ENCODE measurements at regions of chr19 and their contacts with region 1.

Region 1: DNA sequence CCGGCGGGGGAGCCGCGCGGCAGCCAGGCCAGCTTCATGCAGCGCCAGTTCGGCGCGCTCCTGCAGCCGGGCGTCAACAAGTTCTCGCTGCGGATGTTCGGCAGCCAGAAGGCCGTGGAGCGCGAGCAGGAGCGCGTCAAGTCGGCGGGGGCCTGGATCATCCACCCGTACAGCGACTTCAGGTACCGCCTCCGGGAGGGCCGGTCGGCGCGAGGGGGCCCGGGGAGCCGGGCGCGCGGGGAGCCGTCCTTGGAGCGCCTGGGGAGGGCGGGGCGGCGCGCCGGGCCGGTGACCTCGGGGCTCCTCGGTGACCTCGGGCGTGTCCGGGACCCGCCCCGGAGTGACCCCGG is 690 bp downstream of the HCN2 start:
- DNase-seq: no peak
- H3K4me3 ChIP-seq: peak overlapping the region in 1 of 4 donors; percentile 34
- H3K27ac ChIP-seq: no peak overlapping the region
- H3K4me1 ChIP-seq: peaks cover 0 to 28% of the 10 kb centered on the region in 2 donors
- H3K27me3 ChIP-seq: peaks cover 21% of the 10 kb centered on the region
- CTCF ChIP-seq: no peak
- POLR2A ChIP-seq: no peak

Region 2: DNA sequence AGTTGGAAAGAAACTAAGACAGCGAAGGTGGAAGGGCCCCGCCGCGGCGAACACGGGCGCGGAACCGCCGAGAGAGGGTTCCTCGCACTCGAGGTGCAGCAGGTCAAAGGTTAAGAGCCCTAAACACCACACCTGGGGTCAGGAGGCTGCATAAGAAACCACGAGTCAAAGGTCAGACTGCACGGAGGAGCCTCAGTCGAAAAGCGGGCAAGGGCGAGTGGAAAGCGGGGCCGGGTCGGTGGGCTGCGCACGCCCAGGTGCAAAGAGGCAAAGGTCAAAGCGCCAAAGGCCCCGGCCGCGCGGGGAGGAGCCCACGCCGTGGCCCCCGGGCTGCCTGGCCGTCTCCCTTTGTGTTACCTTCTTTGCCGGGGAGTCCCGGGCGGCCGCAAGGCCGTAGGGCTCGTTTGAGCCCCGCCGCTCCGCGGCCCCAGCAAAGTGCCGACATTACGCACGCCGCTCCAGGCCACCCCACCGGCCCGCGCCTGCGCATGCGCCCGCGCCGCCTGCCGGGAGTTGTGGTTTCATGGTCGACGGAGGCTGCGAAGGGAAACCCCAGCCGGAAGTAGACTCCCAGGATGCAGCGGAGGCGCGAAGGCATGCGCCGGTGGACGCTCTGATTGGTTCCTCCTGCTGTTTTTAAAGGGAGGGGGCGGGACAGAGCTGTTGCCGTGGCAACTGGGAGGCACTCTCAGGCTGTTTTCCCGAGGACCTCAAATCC is 42.9 kb after region 1 on chr19 and contains the start of gene POLRMT:
- intact Hi-C with region 1: no loop called
- DNase-seq: peak; percentile 98 to 100 (median 99)
- H3K4me3 ChIP-seq: peak within 1 kb of the TSS; percentile 54 to 90 (median 62)
- H3K27ac ChIP-seq: peak within 1 kb of the TSS; percentile 55 to 87 (median 79)
- H3K4me1 ChIP-seq: peaks cover 9 to 22% of the 10 kb centered on the region in 2 donors
- H3K27me3 ChIP-seq: no peaks in the 10 kb centered on the region
- CTCF ChIP-seq: peak in 3 of 6 experiments; percentile 10 to 27 (median 19)
- POLR2A ChIP-seq: peak; percentile 17 to 31
- total RNA-seq, gene POLRMT: 26.3 to 61.4 (median 41.4) TPM

Region 3: DNA sequence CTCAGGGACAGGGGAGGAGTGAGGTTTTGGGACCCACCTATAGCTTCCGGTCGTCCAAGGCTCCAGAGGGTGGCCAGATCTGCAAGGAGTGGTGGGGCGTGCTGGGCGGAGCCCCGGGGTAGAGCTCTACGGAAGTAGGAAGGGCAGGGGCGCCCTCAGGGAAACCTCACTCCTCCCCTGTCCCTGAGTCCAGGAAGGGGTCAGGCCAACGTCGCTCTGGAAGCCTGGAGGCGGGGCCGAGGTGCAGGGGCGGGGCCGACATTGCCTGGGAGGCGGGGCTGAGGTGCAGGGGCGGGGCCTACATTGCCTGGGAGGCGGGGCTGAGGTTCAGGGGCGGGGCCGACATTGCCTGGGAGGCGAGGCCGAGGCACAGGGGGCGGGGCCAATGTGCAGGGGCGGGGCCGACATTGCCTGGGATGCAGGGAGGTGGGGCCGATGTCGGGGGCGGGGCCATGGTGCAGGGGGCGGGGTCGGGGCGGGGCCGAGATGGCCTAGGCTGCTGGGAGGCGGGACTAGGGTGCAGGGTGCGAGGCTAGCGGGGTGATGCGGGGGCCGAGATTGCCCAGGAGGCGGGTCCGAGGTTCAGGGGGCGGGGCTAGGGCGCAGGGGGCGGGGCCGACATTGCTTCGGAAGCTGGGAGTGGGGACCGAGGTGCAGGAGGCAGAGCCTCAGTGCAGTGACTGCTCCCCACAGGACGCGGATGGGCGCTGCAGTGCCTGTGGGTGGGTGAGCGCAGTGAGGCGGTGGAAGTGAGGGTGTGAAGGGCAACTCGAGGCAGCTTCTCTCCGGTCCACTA is 113.5 kb after region 1 on chr19:
- intact Hi-C with region 1: no loop called
- DNase-seq: peak; percentile 87 to 97 (median 91)
- H3K4me3 ChIP-seq: peak overlapping the region in 2 of 4 donors; percentile 2 to 50
- H3K27ac ChIP-seq: peak overlapping the region in 2 of 5 donors; percentile 37 to 75
- H3K4me1 ChIP-seq: peaks cover 4 to 7% of the 10 kb centered on the region in 2 donors
- H3K27me3 ChIP-seq: no peaks in the 10 kb centered on the region
- CTCF ChIP-seq: peak in 1 of 6 experiments; percentile 18
- POLR2A ChIP-seq: peak; percentile 19 to 71

Region 4: DNA sequence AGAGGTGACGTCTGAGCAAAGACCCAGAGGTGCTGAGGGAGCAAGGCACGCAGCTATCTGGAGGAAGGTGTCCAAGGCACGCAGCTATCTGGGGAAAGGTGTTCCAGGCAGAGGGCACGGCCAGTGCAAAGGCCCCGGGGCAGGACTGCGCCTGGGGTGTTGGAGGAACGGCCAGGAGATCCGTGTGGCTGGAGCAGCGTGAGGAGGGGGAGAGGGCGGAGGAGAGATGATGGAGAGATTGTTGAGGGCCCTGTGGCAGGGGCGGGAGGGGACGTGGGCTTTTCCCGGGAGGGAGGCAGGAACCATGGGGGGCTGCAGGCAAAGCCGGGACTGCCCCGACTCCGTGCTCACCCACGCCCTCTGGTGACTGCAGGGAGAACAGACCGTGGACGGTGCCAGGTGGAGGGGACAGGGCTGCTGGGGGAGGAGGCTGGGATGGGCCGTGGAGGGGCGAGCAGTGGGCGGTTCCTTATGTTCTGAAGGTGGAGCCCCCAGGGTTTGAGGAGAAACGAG is 147.3 kb after region 1 on chr19:
- intact Hi-C with region 1: loop called in 1 of 2 experiments (anchors 10 kb)
- DNase-seq: peak in 4 of 7 donors; percentile 42 to 60 (median 46)
- H3K4me3 ChIP-seq: no peak overlapping the region
- H3K27ac ChIP-seq: no peak overlapping the region
- H3K4me1 ChIP-seq: no peaks in the 10 kb centered on the region
- H3K27me3 ChIP-seq: no peaks in the 10 kb centered on the region
- CTCF ChIP-seq: peak; percentile 13 to 62 (median 46)
- POLR2A ChIP-seq: no peak